ENCODE measurements at regions of chr2 and their contacts with region 1.

Region 1: DNA sequence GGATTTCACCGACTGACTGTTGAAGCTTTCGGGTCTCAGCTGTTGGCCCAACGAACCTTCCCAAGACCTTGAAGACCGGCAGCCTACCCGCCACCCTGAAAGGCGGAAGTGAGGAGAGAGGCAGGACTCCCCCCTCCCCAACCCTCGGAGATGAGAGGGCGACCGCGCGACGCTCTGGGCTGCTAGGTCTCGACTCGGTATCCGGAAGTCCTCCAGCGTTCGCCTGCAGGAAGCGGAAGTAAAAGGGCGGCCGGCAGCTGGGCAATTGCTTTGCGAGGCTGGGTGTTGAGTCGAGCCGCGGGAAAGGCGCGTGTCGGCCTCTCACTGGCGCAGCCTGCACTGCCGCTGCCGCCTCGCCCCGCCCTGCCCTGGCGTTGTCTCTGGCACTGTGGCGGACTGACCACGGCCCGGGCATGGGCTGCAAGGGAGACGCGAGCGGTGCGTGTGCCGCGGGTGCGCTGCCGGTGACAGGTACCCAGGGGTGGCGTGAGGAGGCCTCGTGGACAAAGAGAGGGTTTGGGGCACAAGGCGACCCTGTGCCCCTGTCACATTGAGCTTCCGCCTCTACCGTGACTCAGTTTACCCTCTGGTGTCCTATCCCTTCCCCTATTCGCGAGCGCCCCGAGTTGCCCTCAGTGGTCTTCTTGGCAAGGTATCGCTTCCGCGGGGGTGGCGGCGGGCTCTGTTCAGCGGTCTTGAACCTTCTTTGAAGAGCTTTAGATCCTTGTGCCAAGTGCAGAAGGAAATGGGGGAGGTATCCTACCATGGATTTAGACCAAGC is at the start of gene UGGT1:
- DNase-seq: peak; percentile 93
- H3K4me3 Mint-ChIP-seq: peak within 1 kb of the TSS; percentile 94
- H3K27ac Mint-ChIP-seq: peak within 1 kb of the TSS; percentile 92
- H3K4me1 Mint-ChIP-seq: peaks cover 39% of the 10 kb centered on the region
- H3K27me3 Mint-ChIP-seq: no peaks in the 10 kb centered on the region
- total RNA-seq, gene UGGT1: 72.4 and 74.7 TPM in 2 replicates

Region 2: DNA sequence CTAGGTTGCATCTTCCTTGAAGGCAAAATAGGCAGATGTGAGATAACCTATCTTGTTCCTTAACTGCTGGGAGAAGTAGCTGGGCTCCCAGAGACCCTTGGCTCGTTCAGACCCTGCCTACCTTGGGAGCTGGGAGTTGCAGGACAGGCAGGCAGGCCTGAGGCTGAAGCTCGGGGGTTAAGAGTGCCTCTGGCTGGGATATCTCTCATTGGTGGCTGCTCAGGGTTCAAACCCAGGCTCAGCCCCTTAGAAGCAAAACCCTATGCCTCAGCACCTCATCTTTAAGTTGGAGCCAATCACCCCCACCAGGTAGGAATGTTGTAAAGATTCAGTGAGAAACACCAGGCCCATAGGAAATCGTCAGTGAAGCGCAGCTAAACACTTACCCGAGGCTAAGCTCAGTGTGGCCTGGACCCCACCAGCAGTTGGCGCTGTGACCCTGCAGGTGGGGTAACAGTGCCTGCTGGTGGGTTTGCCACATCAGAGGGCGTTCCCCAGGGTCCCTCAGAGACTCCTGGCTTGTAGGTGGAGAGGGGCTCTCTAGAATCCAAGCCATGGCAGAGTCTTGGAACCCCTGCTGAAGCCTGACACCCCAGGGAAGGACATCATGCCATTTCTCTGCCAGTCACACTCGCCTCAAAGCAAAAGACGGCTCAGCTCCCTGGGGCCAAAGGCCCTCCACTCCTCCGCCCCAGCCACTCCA is 499.8 kb before region 1 on chr2:
- intact Hi-C with region 1: no loop called
- DNase-seq: peak; percentile 36
- H3K4me3 Mint-ChIP-seq: no peak overlapping the region
- H3K27ac Mint-ChIP-seq: no peak overlapping the region
- H3K4me1 Mint-ChIP-seq: peaks cover 4% of the 10 kb centered on the region
- H3K27me3 Mint-ChIP-seq: no peaks in the 10 kb centered on the region

Region 3: DNA sequence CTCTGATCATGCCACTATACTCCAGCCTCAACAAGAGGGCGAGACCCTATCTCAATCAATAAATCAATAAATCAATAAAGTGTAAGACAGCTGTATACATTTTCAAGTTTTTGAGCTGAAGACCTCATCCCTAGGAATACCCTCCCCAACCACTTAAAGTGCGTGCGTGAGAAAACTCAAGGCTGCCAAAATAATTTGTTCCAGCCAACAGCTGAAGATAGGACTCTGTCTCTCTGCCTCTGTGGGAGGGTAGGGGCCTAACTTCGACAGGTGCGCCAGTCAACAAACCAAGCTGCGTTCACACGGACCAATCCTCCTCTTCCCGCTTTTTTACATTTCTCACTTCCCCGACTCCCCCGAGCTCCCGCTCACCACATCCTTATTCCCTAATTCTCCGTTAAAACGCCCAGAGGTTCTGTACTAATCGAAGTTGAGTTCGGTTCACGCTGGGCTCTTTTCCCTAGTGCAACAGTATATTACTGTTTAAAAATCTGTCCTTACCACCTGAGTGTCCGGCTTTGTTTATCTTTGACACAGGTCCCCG is 233.8 kb before region 1 on chr2:
- intact Hi-C with region 1: loop called (anchors 1 kb)
- DNase-seq: peak; percentile 13
- H3K4me3 Mint-ChIP-seq: peak overlapping the region; percentile 100
- H3K27ac Mint-ChIP-seq: peak overlapping the region; percentile 91
- H3K4me1 Mint-ChIP-seq: peaks cover 26% of the 10 kb centered on the region
- H3K27me3 Mint-ChIP-seq: no peaks in the 10 kb centered on the region

Region 4: GRCh38 chr2:127874378-127875271 is 216.5 kb before region 1 on chr2:
- intact Hi-C with region 1: loop called (anchors 5 kb)
- DNase-seq: no peak
- H3K4me3 Mint-ChIP-seq: peak overlapping the region; percentile 9
- H3K27ac Mint-ChIP-seq: peak overlapping the region; percentile 79
- H3K4me1 Mint-ChIP-seq: peaks cover 24% of the 10 kb centered on the region
- H3K27me3 Mint-ChIP-seq: no peaks in the 10 kb centered on the region

Region 5: GRCh38 chr2:128115921-128116623 is 24.9 kb after region 1 on chr2:
- intact Hi-C with region 1: no loop called
- DNase-seq: no peak
- H3K4me3 Mint-ChIP-seq: no peak overlapping the region
- H3K27ac Mint-ChIP-seq: no peak overlapping the region
- H3K4me1 Mint-ChIP-seq: no peaks in the 10 kb centered on the region
- H3K27me3 Mint-ChIP-seq: no peaks in the 10 kb centered on the region